Transverse colon (tissue), 4 donors: ENCODE measurements at regions of chr12 and their contacts with region 1.

Region 1: DNA sequence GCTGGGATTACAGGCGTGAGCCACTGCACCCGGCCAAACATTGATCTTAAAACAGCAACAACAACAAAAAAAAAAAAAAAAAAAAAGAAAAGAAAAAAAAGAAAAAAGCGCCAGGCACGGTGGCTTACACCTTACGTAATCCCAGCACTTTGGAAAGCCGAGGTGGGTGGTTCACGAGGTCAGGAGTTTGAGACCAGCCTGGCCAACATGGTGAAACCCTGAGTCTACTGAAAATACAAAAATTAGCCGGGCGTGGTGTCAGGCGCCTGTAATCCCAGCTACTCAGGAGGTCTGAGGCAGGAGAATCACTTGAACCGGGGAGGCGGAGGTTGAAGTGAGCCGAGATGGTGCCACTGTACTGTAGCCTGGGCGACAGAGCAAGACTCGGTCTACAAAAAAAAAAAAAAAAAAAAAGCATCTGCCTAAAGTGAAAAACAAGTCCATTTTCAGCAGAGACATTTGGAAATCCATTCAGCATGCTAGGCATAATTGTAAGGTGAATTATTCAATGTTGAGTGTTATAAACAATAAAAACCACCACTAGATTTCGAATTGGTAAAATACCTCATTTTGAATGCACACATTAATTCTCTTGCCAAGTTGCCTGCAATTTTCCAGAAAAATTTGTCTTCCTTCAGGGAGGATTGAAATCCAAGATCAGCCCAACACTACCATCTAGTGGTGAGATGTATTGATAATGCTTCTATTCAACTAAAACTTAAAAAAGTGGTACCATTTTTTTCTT is 8.0 kb upstream of the CERS5 start:
- DNase-seq: no peak
- H3K4me3 ChIP-seq: no peak overlapping the region
- H3K27ac ChIP-seq: peak overlapping the region in 1 of 4 donors; percentile 37
- H3K4me1 ChIP-seq: no peaks in the 10 kb centered on the region
- H3K27me3 ChIP-seq: no peaks in the 10 kb centered on the region
- CTCF ChIP-seq: peak; percentile 63 to 78 (median 66)
- EP300 ChIP-seq: no peak
- POLR2A ChIP-seq: no peak

Region 2: GRCh38 chr12:49967042-49967776 is 207.9 kb before region 1 on chr12:
- in situ Hi-C with region 1: loop called in 1 of 4 experiments (anchors 25 kb)
- intact Hi-C with region 1: loop called (anchors 10 kb)
- DNase-seq: peak; percentile 94
- H3K4me3 ChIP-seq: peak overlapping the region in 3 of 4 donors; percentile 15 to 40 (median 33)
- H3K27ac ChIP-seq: no peak overlapping the region
- H3K4me1 ChIP-seq: peaks cover 0 to 11% (median 8%) of the 10 kb centered on the region in 4 donors
- H3K27me3 ChIP-seq: peaks cover 52% of the 10 kb centered on the region
- CTCF ChIP-seq: peak; percentile 83 to 94 (median 89)
- EP300 ChIP-seq: no peak
- POLR2A ChIP-seq: no peak

Region 3: DNA sequence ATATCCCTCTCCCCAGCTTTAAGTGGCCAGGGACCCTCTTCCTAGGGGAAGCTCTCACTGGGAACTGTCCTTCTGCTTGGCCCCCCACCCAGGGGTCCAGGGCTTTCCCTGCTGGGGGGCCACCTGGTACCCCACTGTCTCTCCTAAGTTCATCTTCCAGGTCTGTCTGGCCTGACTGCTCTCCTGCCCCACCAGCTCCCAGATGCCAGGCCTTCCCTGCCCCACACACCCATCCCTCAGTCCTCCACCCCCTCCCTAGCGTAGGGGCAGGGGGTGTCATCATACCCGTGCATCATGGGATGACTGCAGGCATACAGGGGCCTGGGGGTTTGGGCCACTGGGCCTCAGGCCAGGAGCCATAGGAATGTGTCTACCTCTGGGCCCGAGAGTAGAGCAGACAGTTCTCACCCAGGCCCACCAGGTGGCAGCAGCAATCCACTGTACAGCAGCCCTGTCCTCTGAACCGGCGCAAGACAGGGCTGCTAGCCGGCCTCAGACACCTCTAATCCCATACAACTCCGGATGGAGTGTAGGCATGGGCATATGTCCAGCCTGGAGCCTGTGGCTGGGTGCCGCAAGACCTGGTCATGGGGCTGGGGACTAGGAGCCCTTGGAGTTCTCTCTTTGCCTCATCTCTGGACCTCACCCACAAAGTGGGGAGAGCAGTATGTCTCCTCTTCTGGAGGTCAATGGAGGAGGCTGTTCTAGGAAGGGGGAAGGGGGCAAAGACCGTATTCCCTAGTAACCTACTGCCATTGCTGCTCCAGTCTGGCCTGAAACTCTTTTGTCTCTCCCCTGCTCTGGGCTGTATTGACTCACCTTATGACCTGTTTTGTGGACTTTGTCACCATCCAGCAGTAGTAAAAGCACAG is 100.0 kb before region 1 on chr12:
- in situ Hi-C with region 1: loop called in 1 of 4 experiments (anchors 25 kb)
- intact Hi-C with region 1: loop called (anchors 5 kb)
- DNase-seq: peak; percentile 89
- H3K4me3 ChIP-seq: no peak overlapping the region
- H3K27ac ChIP-seq: peak overlapping the region in 1 of 4 donors; percentile 29
- H3K4me1 ChIP-seq: peaks cover 3 to 16% (median 6%) of the 10 kb centered on the region in 4 donors
- H3K27me3 ChIP-seq: no peaks in the 10 kb centered on the region
- CTCF ChIP-seq: peak; percentile 89 to 94 (median 93)
- EP300 ChIP-seq: no peak
- POLR2A ChIP-seq: no peak

Region 4: DNA sequence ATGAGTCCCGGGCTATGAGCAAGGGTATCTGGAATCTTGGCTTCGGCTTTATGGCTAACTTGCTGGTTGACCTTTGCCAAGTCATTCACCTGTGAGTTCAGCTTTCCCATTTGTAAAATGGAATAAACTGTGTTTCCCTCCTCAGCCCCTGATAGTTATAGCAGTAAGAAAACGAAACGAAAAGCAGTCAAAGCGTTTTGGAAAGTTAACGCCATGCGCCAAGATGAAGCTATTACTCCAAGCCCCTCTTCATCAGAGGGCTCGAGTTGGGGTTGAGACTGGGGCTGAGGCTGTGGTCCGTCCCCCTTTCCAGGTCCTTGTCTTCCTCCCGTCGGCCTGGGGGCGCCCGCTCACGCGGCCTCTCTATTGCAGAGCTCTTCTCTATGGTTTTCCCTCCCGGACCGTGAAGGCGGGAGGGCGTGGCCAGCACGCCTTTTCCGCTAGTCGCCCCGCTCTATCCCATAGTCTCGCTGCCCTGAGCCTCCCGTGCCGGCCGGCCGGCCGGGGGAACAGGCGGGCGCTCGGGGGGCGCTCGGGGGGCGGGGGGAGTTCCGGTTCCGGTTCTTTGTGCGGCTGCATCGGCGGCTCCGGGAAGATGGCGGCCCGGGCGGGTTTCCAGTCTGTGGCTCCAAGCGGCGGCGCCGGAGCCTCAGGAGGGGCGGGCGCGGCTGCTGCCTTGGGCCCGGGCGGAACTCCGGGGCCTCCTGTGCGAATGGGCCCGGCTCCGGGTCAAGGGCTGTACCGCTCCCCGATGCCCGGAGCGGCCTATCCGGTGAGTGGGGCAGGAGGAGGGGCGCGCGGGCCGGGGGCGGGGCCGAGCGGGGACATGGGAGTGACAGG is 90.1 kb before region 1 on chr12 and contains the start of gene SMARCD1:
- in situ Hi-C with region 1: loop called in 3 of 4 experiments (anchors 10 to 25 kb)
- intact Hi-C with region 1: no loop called
- DNase-seq: peak; percentile 92
- H3K4me3 ChIP-seq: peak within 1 kb of the TSS; percentile 88 to 98 (median 92)
- H3K27ac ChIP-seq: peak within 1 kb of the TSS; percentile 95 to 99 (median 97)
- H3K4me1 ChIP-seq: peaks cover 0 to 31% (median 10%) of the 10 kb centered on the region in 4 donors
- H3K27me3 ChIP-seq: no peaks in the 10 kb centered on the region
- CTCF ChIP-seq: peak in 2 of 5 experiments; percentile 23 to 44
- EP300 ChIP-seq: peak; percentile 23
- POLR2A ChIP-seq: peak; percentile 26
- total RNA-seq, gene SMARCD1: 23.7 to 52.4 (median 40.4) TPM

Region 5: GRCh38 chr12:50103767-50104321 is 71.3 kb before region 1 on chr12 and contains the start of gene GPD1:
- in situ Hi-C with region 1: loop called in 3 of 4 experiments (anchors 10 to 25 kb)
- intact Hi-C with region 1: loop called (anchors 10 kb)
- DNase-seq: peak; percentile 81
- H3K4me3 ChIP-seq: no peak within 1 kb of the TSS
- H3K27ac ChIP-seq: peak within 1 kb of the TSS in 1 of 4 donors; percentile 38
- H3K4me1 ChIP-seq: peaks cover 15 to 21% (median 17%) of the 10 kb centered on the region in 4 donors
- H3K27me3 ChIP-seq: no peaks in the 10 kb centered on the region
- CTCF ChIP-seq: peak in 1 of 5 experiments; percentile 22
- EP300 ChIP-seq: no peak
- POLR2A ChIP-seq: peak; percentile 52
- total RNA-seq, gene GPD1: 9.2 to 22.1 (median 11.3) TPM in 3 of 4 donors, not detected in the other

Region 6: DNA sequence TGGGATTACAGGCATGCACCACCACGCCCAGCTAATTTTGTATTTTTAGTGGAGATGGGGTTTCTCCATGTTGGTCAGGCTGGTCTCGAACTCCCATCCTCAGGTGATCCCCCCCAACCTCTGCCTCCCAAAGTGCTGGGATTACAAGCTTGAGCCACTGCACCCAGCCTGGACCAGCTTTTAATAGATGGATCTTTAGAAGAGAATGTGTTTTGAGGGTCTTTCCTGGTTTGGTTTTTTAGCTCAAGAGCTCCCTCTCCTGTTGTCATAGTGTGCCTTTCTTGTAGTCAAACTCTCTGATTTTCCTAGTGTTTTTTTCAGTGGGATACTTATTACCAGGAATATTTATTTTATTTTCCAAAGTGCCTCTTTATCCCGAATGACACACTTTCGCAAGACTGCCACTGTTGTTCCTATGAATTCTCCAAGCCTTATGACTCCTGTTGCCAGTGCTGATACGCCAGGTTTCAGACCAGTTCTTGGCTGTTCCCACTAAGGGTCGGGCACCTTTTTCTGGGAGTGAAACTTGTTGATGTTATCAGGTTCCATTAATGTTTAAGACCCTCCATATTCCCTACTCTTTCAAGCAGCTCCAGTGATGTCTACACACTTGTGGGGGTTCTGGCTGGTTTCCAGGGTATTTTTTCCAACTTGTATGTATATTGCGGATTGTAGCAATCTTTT is 139.6 kb after region 1 on chr12:
- in situ Hi-C with region 1: loop called in 1 of 4 experiments (anchors 25 kb)
- intact Hi-C with region 1: no loop called
- DNase-seq: no peak
- H3K4me3 ChIP-seq: no peak overlapping the region
- H3K27ac ChIP-seq: peak overlapping the region in 1 of 4 donors; percentile 6
- H3K4me1 ChIP-seq: peaks cover 0 to 22% (median 9%) of the 10 kb centered on the region in 4 donors
- H3K27me3 ChIP-seq: no peaks in the 10 kb centered on the region
- CTCF ChIP-seq: peak; percentile 41 to 52 (median 48)
- EP300 ChIP-seq: no peak
- POLR2A ChIP-seq: no peak

Region 7: GRCh38 chr12:50482566-50482965 is 307.4 kb after region 1 on chr12:
- in situ Hi-C with region 1: no loop called
- intact Hi-C with region 1: no loop called
- DNase-seq: no peak
- H3K4me3 ChIP-seq: no peak overlapping the region
- H3K27ac ChIP-seq: no peak overlapping the region
- H3K4me1 ChIP-seq: no peaks in the 10 kb centered on the region
- H3K27me3 ChIP-seq: no peaks in the 10 kb centered on the region
- CTCF ChIP-seq: no peak
- EP300 ChIP-seq: no peak
- POLR2A ChIP-seq: no peak